Activated T-helper 1 cell treated with anti-CD3 and anti-CD28 coated beads, Interleukin-12 subunit alpha, Interleukin-12 subunit beta, Interleukin-2, Interleukin-4 antibody, amounts not matched to agents 30 ng/mL and 10 ng/mL and 1 ng/mL, durations not matched to agents 14 hours and 24 hours and 36 hours (primary cell): ENCODE measurements at regions of chr7 and their contacts with region 1.

Region 1: DNA sequence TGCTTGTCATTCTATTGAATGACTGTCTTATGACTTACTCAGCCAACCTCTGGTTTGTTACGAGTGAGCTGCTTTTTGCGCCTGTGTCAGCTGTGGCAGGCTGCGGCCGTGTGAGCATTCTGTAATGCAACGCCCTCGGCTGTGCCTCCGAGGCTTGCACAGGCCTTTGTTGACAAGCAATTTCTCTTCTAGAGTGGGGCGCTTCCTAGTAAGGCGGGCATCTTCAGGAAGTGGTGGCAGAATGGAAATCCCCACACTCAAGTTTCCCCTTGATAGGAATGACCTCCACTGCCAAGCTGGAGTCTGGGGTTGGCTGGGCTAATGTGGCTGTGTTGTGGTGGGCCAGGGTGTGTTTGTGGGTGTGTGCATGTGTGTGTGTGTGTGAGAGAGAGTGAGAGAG is 20.2 kb upstream of the TMEM178B start:
- DNase-seq: peak; percentile 71
- H3K4me3 Mint-ChIP-seq: peak overlapping the region; percentile 66
- H3K27ac Mint-ChIP-seq: peak overlapping the region; percentile 97
- H3K4me1 Mint-ChIP-seq: peaks cover 19% of the 10 kb centered on the region
- H3K27me3 Mint-ChIP-seq: peaks cover 11% of the 10 kb centered on the region

Region 2: GRCh38 chr7:140439359-140439758 is 614.3 kb before region 1 on chr7:
- intact Hi-C with region 1: no loop called
- DNase-seq: no peak
- H3K4me3 Mint-ChIP-seq: no peak overlapping the region
- H3K27ac Mint-ChIP-seq: peak overlapping the region; percentile 58
- H3K4me1 Mint-ChIP-seq: peaks cover 13% of the 10 kb centered on the region
- H3K27me3 Mint-ChIP-seq: peaks cover 4% of the 10 kb centered on the region

Region 3: DNA sequence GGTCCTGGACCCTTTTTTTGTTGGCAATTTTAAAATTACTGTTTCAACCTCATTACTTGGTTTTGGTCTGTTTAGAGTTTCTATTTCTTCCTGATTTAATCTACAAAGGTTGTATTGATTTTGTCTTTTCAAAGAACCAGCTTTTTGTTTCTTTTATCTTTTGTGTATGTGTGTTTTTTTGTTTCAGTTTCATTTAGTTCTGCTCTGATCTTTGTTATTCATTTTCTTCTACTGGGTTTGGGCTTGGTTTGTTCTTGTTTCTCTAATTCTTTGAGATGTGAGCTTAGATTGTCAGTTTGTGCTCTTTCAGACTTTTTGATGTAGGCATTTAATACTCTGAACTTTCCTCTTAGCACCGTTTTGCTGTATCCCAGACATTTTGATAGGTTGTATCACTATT is 30.3 kb before region 1 on chr7:
- intact Hi-C with region 1: loop called (anchors 2 kb)
- DNase-seq: no peak
- H3K4me3 Mint-ChIP-seq: peak overlapping the region; percentile 46
- H3K27ac Mint-ChIP-seq: peak overlapping the region; percentile 46
- H3K4me1 Mint-ChIP-seq: peaks cover 22% of the 10 kb centered on the region
- H3K27me3 Mint-ChIP-seq: peaks cover 23% of the 10 kb centered on the region

Region 4: DNA sequence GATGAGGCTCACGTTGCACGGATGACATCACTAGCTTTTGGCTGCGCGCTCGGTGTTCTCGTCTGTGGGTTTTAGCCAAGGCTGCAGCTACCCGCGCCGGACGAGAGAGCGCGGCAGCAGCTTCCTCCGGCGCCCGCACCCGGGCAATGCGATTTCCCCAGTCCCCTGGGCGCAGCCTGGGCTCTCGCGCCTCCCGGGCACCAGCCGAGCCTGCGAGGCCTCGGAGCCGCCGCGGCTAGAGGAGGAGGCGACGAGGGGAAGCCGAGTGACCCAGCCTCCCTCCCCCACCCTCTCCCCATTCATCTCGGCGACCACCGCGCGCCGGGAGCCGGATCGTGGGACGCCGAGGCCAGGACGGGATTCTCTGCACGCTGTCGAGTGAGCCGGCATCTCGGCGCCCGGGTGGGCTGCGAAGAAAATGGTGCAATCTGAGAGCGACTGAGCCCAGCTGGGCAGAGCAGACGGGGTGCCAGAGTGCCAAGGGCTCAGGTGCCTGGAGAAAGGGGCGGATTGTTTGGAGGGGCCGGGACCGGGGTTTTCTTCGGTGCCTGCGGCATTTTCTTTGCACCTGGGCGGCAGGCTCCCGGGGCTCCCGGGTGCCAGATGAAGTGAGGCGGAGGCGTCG is 19.0 kb after region 1 on chr7:
- intact Hi-C with region 1: loop called (anchors 1 kb)
- DNase-seq: peak; percentile 40
- H3K4me3 Mint-ChIP-seq: peak overlapping the region; percentile 79
- H3K27ac Mint-ChIP-seq: no peak overlapping the region
- H3K4me1 Mint-ChIP-seq: peaks cover 36% of the 10 kb centered on the region
- H3K27me3 Mint-ChIP-seq: peaks cover 39% of the 10 kb centered on the region